ENCODE measurements at regions of chr11 and their contacts with region 1.

Region 1: GRCh38 chr11:14148653-14149273 is 186.2 kb downstream of the SPON1 start:
- DNase-seq: no peak
- H3K4me3 Mint-ChIP-seq: no peak overlapping the region
- H3K27ac Mint-ChIP-seq: no peak overlapping the region
- H3K4me1 Mint-ChIP-seq: peaks cover 7% of the 10 kb centered on the region
- H3K27me3 Mint-ChIP-seq: peaks cover 12% of the 10 kb centered on the region

Region 2: DNA sequence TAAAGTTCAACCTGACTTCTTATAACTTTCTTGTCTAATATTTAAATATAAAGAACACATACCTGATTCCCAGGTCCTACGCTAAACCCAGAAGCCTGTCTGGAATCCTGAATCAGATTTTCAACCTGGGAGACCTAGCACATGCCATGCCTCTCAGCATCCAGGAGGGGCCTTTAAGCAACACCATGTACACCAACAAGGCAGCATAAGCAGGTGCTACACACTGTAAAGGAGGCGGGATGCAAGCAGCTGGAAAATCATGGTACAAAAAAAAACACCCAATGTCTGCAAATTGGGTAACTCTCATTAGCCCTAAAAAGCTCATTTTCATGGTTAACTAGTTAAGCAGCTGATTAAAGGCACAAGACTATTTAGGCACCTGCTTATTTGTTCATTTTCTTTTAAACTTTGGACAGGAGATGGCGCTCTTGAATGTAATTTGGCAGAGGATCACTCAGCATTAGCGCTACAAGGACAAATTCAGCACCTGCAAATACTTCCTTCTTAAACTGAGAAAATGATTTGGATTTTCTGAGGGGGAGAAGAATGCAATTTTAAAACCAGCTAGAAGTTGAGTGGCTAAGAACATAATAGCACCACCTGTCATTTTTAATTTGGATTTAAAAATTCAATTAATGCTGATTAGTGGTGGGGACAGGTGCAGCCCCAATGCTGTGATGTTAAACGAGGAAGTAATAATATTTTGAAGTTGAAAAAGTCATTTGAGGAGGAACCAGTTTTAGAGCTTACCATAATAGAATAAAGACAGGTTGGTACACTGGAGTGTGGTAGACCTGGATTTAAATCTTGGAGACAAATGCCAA is 376.3 kb before region 1 on chr11:
- intact Hi-C with region 1: loop called (anchors 2 kb)
- DNase-seq: no peak
- H3K4me3 Mint-ChIP-seq: no peak overlapping the region
- H3K27ac Mint-ChIP-seq: no peak overlapping the region
- H3K4me1 Mint-ChIP-seq: no peaks in the 10 kb centered on the region
- H3K27me3 Mint-ChIP-seq: peaks cover 21% of the 10 kb centered on the region

Region 3: DNA sequence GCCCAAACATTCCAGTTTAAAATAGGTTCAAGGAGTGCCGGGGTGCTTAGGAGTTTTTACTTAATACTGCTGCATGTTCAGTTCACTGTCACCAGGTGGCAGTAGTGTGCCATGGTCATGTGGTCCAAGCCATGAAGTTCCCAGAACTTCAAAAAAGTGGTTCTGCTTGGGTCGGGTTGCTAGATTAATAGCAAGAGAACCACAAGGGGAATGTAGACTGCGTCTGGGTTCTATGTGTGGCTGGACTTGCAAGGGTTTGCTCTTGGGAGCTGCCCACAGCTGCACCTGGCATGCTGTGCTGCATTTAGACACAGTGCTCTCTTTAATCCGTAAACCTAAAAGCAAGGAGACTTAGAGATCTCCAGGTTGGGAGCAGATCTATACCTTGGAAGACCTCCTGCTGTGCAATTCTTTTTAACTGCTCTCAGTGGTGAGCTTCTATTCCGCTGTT is 192.8 kb before region 1 on chr11:
- intact Hi-C with region 1: loop called (anchors 1 kb)
- DNase-seq: peak; percentile 27
- H3K4me3 Mint-ChIP-seq: no peak overlapping the region
- H3K27ac Mint-ChIP-seq: no peak overlapping the region
- H3K4me1 Mint-ChIP-seq: no peaks in the 10 kb centered on the region
- H3K27me3 Mint-ChIP-seq: peaks cover 43% of the 10 kb centered on the region

Region 4: DNA sequence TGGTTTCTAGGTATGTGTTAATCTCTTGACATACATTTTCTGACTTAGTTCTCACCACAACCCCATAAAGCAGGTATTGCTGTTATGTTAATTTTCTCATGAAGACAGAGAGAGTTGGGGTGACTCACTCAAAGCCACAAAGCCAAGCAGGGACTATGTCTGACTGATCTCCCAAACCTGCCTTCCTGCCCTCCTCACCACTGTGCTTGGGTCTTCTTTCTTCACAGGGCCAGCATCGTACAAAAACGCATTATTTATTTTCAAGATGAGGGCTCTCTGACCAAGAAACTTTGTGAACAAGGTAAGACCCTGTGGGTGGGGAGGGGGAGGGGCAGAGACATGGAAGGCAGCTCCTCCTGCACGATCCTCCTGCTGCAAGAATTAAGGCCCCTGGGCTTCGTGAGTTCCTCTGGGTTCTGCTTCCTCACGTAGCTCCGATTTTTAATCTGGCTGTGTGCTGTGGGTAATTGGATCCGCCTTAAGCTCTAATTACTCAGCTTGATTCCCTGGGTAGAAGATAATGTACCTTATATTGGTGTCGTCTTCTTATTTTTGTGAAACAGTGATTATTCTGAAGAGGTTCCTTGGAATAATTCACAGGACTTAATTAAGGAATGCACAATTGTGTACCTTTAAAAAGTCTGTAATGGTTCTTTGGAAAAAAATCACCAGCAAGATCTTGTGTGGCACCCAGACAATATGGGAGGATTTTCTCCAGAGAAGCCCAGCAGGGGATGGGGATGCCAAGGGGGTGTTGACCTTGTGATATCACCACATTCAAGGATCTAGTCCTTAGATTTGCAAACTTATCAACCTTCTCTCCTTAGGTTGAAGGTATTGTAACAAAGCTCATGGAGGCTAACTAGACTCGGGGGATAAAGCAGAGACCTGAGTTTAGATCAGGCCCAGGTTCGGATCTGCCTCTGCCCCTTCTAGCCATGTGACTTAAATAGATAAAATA is 73.4 kb before region 1 on chr11:
- intact Hi-C with region 1: loop called (anchors 2 kb)
- DNase-seq: peak; percentile 57
- H3K4me3 Mint-ChIP-seq: no peak overlapping the region
- H3K27ac Mint-ChIP-seq: no peak overlapping the region
- H3K4me1 Mint-ChIP-seq: peaks cover 43% of the 10 kb centered on the region
- H3K27me3 Mint-ChIP-seq: peaks cover 20% of the 10 kb centered on the region

Region 5: GRCh38 chr11:14190992-14191778 is 42.4 kb after region 1 on chr11:
- intact Hi-C with region 1: no loop called
- DNase-seq: no peak
- H3K4me3 Mint-ChIP-seq: no peak overlapping the region
- H3K27ac Mint-ChIP-seq: no peak overlapping the region
- H3K4me1 Mint-ChIP-seq: no peaks in the 10 kb centered on the region
- H3K27me3 Mint-ChIP-seq: peaks cover under 1% of the 10 kb centered on the region

Region 6: DNA sequence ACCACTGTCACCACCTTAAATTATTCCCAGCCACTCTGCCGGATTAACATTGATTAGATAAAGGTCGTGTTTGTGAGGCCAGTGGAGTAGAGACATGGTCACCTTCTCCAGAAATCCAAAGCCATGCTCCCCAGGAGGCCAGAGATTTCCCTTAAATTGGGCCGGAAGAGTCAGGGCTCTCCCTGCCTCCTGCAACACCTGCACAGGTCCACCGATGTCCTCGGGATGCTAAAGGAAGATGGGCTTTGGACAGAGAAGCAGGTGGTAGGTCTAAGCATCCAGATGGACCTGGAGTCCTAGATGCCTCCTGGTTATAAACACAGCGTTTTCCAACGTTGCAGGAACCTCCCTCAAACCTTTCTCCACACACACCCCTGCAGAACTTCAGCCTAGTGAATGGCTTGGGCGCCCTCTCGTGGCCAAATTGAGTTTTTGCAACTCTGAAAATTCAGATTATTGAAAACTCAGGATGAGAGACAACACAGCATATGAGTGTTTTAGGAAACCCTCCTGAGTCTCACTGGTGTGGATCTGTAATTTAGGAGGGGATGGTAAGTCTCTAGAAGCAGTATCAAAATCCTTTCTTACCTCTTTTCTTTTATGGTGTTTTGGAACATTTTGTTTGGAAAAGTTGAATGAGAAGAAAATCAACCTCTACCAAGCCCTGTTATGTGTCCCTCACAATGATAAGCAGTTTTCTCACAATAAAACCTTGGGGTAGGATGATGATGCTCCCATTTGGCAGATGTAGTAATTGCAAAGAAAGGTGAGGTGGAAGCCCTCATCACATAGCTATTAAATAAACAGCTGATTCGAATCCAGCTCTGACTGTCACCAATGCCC is 100.6 kb after region 1 on chr11:
- intact Hi-C with region 1: loop called (anchors 10 kb)
- DNase-seq: peak; percentile 46
- H3K4me3 Mint-ChIP-seq: no peak overlapping the region
- H3K27ac Mint-ChIP-seq: no peak overlapping the region
- H3K4me1 Mint-ChIP-seq: peaks cover 15% of the 10 kb centered on the region
- H3K27me3 Mint-ChIP-seq: peaks cover 21% of the 10 kb centered on the region